GM12878 (cell line): ENCODE measurements at regions of chr6 and their contacts with region 1.

Region 1: DNA sequence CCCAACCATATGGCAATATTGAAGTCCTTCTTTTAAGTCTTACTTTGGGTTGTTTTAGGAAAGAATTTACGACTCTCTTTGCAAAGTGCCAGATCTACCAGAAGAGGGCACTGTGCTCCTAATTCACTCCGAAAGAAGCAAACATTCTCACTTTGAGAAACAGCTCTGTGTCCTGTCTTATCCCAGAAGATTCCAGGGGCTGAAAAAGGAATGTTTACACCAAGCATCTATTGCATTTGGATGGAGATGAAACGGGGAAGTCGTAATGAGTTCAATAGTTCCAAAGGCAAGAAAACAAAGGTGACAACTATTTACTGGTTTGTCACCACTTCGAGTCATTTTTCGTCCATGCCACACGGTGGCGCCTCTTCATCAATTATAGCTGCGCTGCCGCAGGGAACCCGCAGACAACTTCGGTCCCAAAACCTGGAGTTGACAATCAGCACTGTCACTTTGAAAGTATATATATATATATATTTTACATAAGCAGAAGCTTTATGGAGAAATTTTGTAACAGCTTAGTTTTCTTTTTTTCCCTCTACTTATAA is 121.6 kb downstream of the MOXD1 start:
- DNase-seq: peak; percentile 64
- ATAC-seq: peak; percentile 94
- H3K4me3 ChIP-seq: peak overlapping the region; percentile 74
- H3K27ac ChIP-seq: no peak overlapping the region
- H3K4me1 ChIP-seq: no peaks in the 10 kb centered on the region
- H3K27me3 ChIP-seq: peaks cover 0 to 3% of the 10 kb centered on the region in 2 experiments; a peak in 2 of 4 replicates
- CTCF ChIP-seq: peak; percentile 61 to 94 (median 63)
- EP300 ChIP-seq: no peak
- POLR2A ChIP-seq: no peak
- RAD21 ChIP-seq: peak; percentile 84

Region 2: GRCh38 chr6:132131758-132132157 is 147.9 kb before region 1 on chr6:
- CTCF ChIA-PET with region 1: no interaction called
- POLR2A ChIA-PET with region 1: no interaction called
- RAD21 ChIA-PET with region 1: no interaction called
- SMC1A ChIA-PET with region 1: no interaction called
- in situ Hi-C with region 1: no loop called
- intact Hi-C with region 1: no loop called
- DNase-seq: no peak
- ATAC-seq: no peak
- H3K4me3 ChIP-seq: no peak overlapping the region
- H3K27ac ChIP-seq: no peak overlapping the region
- H3K4me1 ChIP-seq: no peaks in the 10 kb centered on the region
- H3K27me3 ChIP-seq: no peaks in the 10 kb centered on the region; a peak in 1 of 4 replicates
- CTCF ChIP-seq: no peak
- EP300 ChIP-seq: no peak
- POLR2A ChIP-seq: no peak
- RAD21 ChIP-seq: no peak

Region 3: GRCh38 chr6:132224943-132225342 is 54.7 kb before region 1 on chr6:
- CTCF ChIA-PET with region 1: no interaction called
- POLR2A ChIA-PET with region 1: no interaction called
- RAD21 ChIA-PET with region 1: no interaction called
- SMC1A ChIA-PET with region 1: no interaction called
- in situ Hi-C with region 1: no loop called
- intact Hi-C with region 1: no loop called
- DNase-seq: no peak
- ATAC-seq: no peak
- H3K4me3 ChIP-seq: no peak overlapping the region
- H3K27ac ChIP-seq: no peak overlapping the region
- H3K4me1 ChIP-seq: no peaks in the 10 kb centered on the region
- H3K27me3 ChIP-seq: no peaks in the 10 kb centered on the region
- CTCF ChIP-seq: no peak
- EP300 ChIP-seq: no peak
- POLR2A ChIP-seq: no peak
- RAD21 ChIP-seq: no peak

Region 4: DNA sequence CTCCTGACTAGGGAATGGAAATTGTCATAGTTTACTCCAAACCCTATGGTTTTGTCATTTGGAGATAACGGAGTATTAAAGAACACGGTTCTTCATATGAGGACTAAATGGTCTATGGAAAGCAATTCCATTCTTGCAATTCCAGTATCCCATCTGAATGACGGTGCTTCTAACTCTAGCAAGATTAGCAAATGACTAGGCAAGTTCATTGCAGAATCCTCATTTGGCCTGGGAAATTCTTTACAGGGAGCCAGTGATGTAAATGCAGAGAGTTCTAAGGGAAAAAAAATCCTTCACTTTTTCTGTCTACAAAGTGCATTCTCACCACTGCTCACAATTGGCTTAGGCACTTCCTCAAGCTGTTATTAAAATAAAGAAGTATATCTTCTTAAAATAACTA is 10.1 kb after region 1 on chr6:
- CTCF ChIA-PET with region 1: interaction called, 462 read pairs
- POLR2A ChIA-PET with region 1: interaction called, 3 read pairs
- RAD21 ChIA-PET with region 1: interaction called, 11 read pairs
- SMC1A ChIA-PET with region 1: interaction called, 23 read pairs
- in situ Hi-C with region 1: no loop called
- intact Hi-C with region 1: no loop called
- DNase-seq: no peak
- ATAC-seq: no peak
- H3K4me3 ChIP-seq: no peak overlapping the region
- H3K27ac ChIP-seq: no peak overlapping the region
- H3K4me1 ChIP-seq: peaks cover 3% of the 10 kb centered on the region
- H3K27me3 ChIP-seq: no peaks in the 10 kb centered on the region
- CTCF ChIP-seq: no peak
- EP300 ChIP-seq: no peak
- POLR2A ChIP-seq: no peak
- RAD21 ChIP-seq: no peak

Region 5: DNA sequence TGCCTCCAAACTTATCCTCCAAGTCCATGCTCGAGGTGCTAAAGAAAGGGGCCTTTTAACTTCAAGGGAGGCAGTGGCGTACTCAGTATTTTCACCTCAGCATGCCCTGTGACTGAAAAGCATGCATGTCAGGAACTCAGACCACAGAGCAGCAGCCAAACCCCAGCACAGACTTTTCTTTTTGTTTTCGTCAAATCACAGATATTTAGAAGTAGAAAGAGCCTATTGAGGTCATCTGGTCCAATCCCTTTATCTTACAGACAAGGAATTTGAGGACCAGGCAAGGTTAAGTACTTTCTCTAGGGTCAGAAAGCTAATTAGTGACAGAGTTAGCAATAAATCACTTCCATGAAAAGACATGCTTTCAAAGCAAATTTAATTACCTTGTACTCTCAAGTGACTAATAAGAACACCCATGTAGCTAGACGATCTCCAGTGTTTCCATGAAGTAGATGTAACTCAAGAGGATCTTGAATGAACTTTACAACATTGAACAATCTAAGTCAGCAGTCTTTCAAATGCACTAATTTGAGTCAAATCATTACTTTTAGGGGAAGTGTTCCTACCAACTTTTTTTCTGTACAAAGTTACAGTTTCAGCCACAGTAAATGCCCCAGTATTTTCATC is 85.7 kb after region 1 on chr6:
- CTCF ChIA-PET with region 1: interaction called, 17 read pairs
- POLR2A ChIA-PET with region 1: no interaction called
- RAD21 ChIA-PET with region 1: no interaction called
- SMC1A ChIA-PET with region 1: no interaction called
- in situ Hi-C with region 1: no loop called
- intact Hi-C with region 1: no loop called
- DNase-seq: peak; percentile 81
- ATAC-seq: peak; percentile 96
- H3K4me3 ChIP-seq: no peak overlapping the region
- H3K27ac ChIP-seq: 0 out of 2 replicates have a peak overlapping the region, but pooled peaks have one; percentile 35
- H3K4me1 ChIP-seq: peaks cover 17% of the 10 kb centered on the region; the same call in 1 of the 2 replicates
- H3K27me3 ChIP-seq: peaks cover 0 to 3% of the 10 kb centered on the region in 2 experiments; a peak in 2 of 4 replicates
- CTCF ChIP-seq: no peak
- EP300 ChIP-seq: peak; percentile 96 to 99
- POLR2A ChIP-seq: no peak
- RAD21 ChIP-seq: no peak

Region 6: DNA sequence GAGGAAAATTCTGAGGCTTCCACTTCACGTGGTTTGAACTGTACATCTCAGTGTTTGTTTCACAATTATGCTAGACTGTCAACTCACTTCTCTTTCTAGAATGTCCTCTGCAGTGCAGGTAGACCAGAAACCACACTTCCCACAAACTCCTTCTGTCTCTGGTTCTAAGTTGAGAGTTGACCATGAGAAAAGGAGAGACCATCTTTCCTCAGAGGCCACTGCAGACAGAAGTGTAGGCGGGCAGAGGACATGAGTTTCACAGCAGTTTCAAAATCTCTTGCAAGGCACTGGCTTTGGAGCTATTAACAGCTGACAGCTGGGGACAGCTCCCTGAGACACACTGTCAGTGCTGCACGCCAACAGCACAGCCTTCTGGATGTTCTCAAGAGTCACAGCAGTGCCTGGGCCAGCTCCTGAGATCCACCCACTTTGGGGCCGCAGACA is 177.1 kb after region 1 on chr6:
- CTCF ChIA-PET with region 1: interaction called, 49 read pairs
- POLR2A ChIA-PET with region 1: no interaction called
- RAD21 ChIA-PET with region 1: interaction called, 12 read pairs
- SMC1A ChIA-PET with region 1: interaction called, 15 read pairs
- in situ Hi-C with region 1: no loop called
- intact Hi-C with region 1: loop called (anchors 1 kb)
- DNase-seq: peak; percentile 90
- ATAC-seq: peak; percentile 89
- H3K4me3 ChIP-seq: no peak overlapping the region
- H3K27ac ChIP-seq: no peak overlapping the region; the same call in 1 of the 2 replicates
- H3K4me1 ChIP-seq: peaks cover 33% of the 10 kb centered on the region
- H3K27me3 ChIP-seq: no peaks in the 10 kb centered on the region
- CTCF ChIP-seq: peak; percentile 45 to 62 (median 57); a peak in 5 of 6 replicates
- EP300 ChIP-seq: peak in 1 of 2 experiments; percentile 66; a peak in 2 of 4 replicates
- POLR2A ChIP-seq: no peak
- RAD21 ChIP-seq: peak; percentile 84

Region 7: GRCh38 chr6:132483779-132484679 is 204.4 kb after region 1 on chr6:
- CTCF ChIA-PET with region 1: interaction called, 263 read pairs
- POLR2A ChIA-PET with region 1: no interaction called
- RAD21 ChIA-PET with region 1: interaction called, 77 read pairs
- SMC1A ChIA-PET with region 1: interaction called, 83 read pairs
- in situ Hi-C with region 1: loop called (anchors 5 kb)
- intact Hi-C with region 1: loop called (anchors 1 kb)
- DNase-seq: peak; percentile 37
- ATAC-seq: peak; percentile 93
- H3K4me3 ChIP-seq: no peak overlapping the region
- H3K27ac ChIP-seq: no peak overlapping the region
- H3K4me1 ChIP-seq: peaks cover 31% of the 10 kb centered on the region
- H3K27me3 ChIP-seq: no peaks in the 10 kb centered on the region
- CTCF ChIP-seq: peak; percentile 47 to 74 (median 60); a peak in 5 of 6 replicates
- EP300 ChIP-seq: no peak
- POLR2A ChIP-seq: no peak
- RAD21 ChIP-seq: peak; percentile 92

Region 8: DNA sequence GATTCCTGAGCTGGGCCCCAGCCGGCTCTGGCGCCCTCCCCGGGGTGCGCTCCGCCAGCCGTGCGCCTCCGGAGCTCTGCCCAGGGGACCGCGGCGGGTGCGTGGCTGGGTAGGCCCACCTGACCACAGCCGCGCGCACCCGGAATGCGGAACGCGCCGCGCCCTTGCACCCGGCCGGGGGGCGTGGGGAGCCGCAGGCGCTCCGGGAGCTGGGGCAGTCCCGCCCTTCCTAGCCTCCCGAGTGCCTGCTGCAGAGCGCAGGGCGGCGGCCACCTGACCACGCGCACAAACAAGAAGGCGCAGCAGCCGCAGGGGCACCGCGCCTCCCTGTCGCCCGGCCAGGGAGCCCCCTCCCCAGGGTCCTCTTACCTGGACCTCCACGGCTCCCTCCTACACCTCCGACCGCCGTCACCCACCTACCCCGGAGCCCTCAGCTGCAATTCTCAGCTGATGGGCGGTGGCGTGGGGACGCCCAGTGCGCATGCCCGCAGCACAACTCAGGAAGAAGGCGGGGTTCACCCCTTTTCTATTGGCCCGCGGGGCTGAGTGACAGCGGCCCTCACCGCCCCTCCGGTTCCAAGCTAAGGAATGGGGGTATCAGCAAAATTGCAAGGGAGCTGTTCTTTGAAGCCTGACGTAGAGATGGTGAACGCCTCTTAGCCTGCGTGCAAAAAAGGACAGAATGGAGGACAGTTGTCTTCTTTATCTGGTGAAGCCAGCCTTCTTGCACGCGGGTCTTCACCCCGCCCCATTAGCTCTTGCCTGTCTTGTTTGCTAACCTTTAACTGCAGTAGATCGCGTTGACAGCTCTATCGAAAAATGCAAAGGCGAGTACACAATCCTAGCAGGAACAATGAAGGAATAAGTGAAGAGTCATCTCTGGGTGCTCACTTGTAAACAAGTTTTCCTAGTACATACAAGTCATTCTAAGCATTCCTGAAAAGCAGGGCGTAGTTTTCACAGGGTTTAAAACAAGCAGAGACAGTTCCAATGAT is 233.3 kb after region 1 on chr6 and contains the start of gene STX7:
- CTCF ChIA-PET with region 1: interaction called, 11 read pairs
- POLR2A ChIA-PET with region 1: no interaction called
- RAD21 ChIA-PET with region 1: interaction called, 4 read pairs
- SMC1A ChIA-PET with region 1: interaction called, 8 read pairs
- in situ Hi-C with region 1: no loop called
- intact Hi-C with region 1: no loop called
- DNase-seq: peak; percentile 48
- ATAC-seq: peak; percentile 91
- H3K4me3 ChIP-seq: peak within 1 kb of the TSS; percentile 61
- H3K27ac ChIP-seq: peak within 1 kb of the TSS; percentile 63
- H3K4me1 ChIP-seq: peaks cover 6% of the 10 kb centered on the region
- H3K27me3 ChIP-seq: no peaks in the 10 kb centered on the region
- CTCF ChIP-seq: no peak
- EP300 ChIP-seq: no peak
- POLR2A ChIP-seq: peak; percentile 77
- RAD21 ChIP-seq: no peak
- polyA plus RNA-seq, gene STX7: 26.5 to 30.7 TPM

Region 9: GRCh38 chr6:132669690-132670291 is 390.1 kb after region 1 on chr6:
- CTCF ChIA-PET with region 1: interaction called, 9 read pairs
- POLR2A ChIA-PET with region 1: no interaction called
- RAD21 ChIA-PET with region 1: no interaction called
- SMC1A ChIA-PET with region 1: interaction called, 5 read pairs
- in situ Hi-C with region 1: no loop called
- intact Hi-C with region 1: loop called (anchors 10 kb)
- DNase-seq: no peak
- ATAC-seq: peak; percentile 86
- H3K4me3 ChIP-seq: no peak overlapping the region
- H3K27ac ChIP-seq: no peak overlapping the region
- H3K4me1 ChIP-seq: no peaks in the 10 kb centered on the region
- H3K27me3 ChIP-seq: no peaks in the 10 kb centered on the region
- CTCF ChIP-seq: peak; percentile 38 to 61 (median 48); a peak in 4 of 6 replicates
- EP300 ChIP-seq: no peak
- POLR2A ChIP-seq: no peak
- RAD21 ChIP-seq: peak; percentile 66